PC-3 (cell line): ENCODE measurements at regions of chr1 and their contacts with region 1.

Region 1: GRCh38 chr1:170010443-170010842 is 64.1 kb downstream of the KIFAP3 start:
- DNase-seq: peak; percentile 69
- ATAC-seq: no peak
- H3K4me3 ChIP-seq: no peak overlapping the region
- H3K27ac ChIP-seq: no peak overlapping the region
- H3K4me1 ChIP-seq: 0 out of 2 replicates have a peak, but pooled peaks cover 5% of the 10 kb centered on the region
- H3K27me3 ChIP-seq: no peaks in the 10 kb centered on the region
- CTCF ChIP-seq: peak; percentile 58

Region 2: DNA sequence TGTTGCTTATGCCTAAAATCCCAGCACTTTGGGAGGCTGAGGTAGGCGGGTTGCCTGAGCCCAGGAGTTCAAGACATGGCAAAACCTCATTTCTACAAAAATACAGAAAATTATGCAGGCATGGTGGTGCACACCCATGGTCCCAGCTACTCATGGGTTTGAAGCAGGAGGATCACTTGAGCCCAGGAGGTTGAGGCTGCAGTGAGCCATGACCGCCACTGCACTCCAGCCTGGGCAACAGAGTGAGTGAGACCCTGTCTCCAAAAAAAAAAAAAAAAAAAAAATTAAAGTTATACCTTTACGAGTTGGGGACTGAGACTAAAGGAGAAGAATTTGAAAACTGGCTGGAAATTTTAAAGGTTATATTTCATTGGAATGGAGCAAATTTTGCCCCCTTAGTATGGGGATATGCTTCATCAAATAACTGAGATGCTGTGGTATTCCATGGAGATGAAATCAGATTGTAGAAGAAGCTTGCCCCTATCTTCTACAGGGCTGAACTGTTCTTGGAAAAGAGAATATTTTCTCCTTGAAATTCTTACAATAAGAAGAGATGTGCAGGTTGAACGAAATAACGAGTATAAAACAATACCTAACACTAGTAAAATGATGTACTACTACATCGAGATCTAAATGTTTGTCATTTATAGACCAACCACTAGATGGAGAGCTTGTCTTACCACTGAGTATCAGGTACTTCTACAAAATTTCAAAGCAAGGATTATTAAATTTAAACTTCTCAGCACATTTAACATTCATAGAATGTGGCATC is 81.8 kb before region 1 on chr1:
- CTCF ChIA-PET with region 1: no interaction called
- POLR2A ChIA-PET with region 1: no interaction called
- intact Hi-C with region 1: loop called (anchors 5 kb)
- DNase-seq: peak; percentile 61
- ATAC-seq: peak; percentile 45; the same call in 1 of the 2 replicates
- H3K4me3 ChIP-seq: no peak overlapping the region
- H3K27ac ChIP-seq: no peak overlapping the region
- H3K4me1 ChIP-seq: peaks cover 17% of the 10 kb centered on the region
- H3K27me3 ChIP-seq: no peaks in the 10 kb centered on the region
- CTCF ChIP-seq: peak; percentile 79

Region 3: GRCh38 chr1:170074250-170075157 is 64.1 kb after region 1 on chr1 and contains the start of gene KIFAP3:
- CTCF ChIA-PET with region 1: no interaction called
- POLR2A ChIA-PET with region 1: no interaction called
- intact Hi-C with region 1: loop called (anchors 5 kb)
- DNase-seq: peak; percentile 95
- ATAC-seq: peak; percentile 95
- H3K4me3 ChIP-seq: peak within 1 kb of the TSS; percentile 74
- H3K27ac ChIP-seq: 0 out of 2 replicates have a peak within 1 kb of the TSS, but pooled peaks have one; percentile 19
- H3K4me1 ChIP-seq: peaks cover 10% of the 10 kb centered on the region; the same call in 1 of the 2 replicates
- H3K27me3 ChIP-seq: no peaks in the 10 kb centered on the region
- CTCF ChIP-seq: peak; percentile 55
- total RNA-seq, gene KIFAP3: 5.1 and 6.9 TPM in 2 replicates

Region 4: GRCh38 chr1:170085091-170085490 is 74.6 kb after region 1 on chr1:
- CTCF ChIA-PET with region 1: no interaction called
- POLR2A ChIA-PET with region 1: no interaction called
- intact Hi-C with region 1: no loop called
- DNase-seq: no peak
- ATAC-seq: no peak
- H3K4me3 ChIP-seq: no peak overlapping the region
- H3K27ac ChIP-seq: no peak overlapping the region
- H3K4me1 ChIP-seq: no peaks in the 10 kb centered on the region
- H3K27me3 ChIP-seq: no peaks in the 10 kb centered on the region
- CTCF ChIP-seq: no peak

Region 5: DNA sequence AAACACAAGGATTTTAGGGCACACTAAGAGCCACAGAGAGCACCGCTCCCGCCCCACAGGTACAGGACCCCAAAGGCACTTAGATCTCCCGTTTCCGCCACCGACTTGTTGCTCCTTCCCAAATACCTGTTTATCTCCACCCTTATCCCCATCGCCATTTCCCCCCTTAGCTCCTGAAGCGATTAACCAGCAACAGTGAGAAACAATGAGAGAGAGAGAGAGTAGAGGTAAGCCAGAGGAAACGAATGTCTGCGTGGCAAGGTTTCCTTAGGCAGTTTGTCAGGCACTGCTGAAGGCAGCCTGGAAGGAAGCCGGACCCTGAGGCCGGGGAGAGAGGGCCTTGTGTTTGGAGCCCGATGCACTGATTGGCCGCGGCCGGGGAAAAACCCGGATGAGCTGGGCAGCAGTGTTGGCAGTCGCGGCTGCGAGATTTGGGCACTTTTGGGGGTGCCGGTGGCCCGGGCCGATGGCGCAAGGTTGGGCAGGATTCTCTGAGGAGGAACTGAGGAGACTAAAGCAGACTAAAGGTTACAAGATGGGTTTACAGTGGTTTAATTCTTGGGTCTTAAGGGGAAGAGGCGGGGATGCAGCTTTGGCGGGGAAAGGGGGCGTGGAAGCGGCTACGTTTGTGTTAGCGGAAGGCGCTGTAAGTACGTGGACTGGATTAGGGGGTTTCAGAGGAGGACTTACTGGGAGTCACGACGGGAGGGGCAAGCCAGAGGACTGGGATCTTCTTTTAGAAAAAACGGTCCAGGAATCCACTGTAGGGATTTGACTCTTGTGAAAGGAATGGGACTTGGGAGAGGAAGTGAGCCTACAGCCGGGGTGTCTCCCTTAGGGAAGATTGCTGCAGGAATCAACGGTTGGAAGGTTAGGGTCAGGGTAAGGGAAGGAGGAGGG is 521.6 kb after region 1 on chr1 and contains the start of gene GORAB:
- CTCF ChIA-PET with region 1: no interaction called
- POLR2A ChIA-PET with region 1: no interaction called
- intact Hi-C with region 1: loop called (anchors 5 kb)
- DNase-seq: peak; percentile 96
- ATAC-seq: peak; percentile 97
- H3K4me3 ChIP-seq: peak within 1 kb of the TSS; percentile 72
- H3K27ac ChIP-seq: peak within 1 kb of the TSS; percentile 81
- H3K4me1 ChIP-seq: peaks cover 19% of the 10 kb centered on the region
- H3K27me3 ChIP-seq: peaks cover 4% of the 10 kb centered on the region; the same call in 1 of the 2 replicates
- CTCF ChIP-seq: no peak
- total RNA-seq, gene GORAB: 22.1 and 23.2 TPM in 2 replicates

Region 6: GRCh38 chr1:170765712-170766330 is 755.4 kb after region 1 on chr1:
- CTCF ChIA-PET with region 1: interaction called, 4 read pairs
- POLR2A ChIA-PET with region 1: no interaction called
- intact Hi-C with region 1: loop called (anchors 1 kb)
- DNase-seq: peak; percentile 46
- ATAC-seq: peak; percentile 43
- H3K4me3 ChIP-seq: no peak overlapping the region
- H3K27ac ChIP-seq: no peak overlapping the region
- H3K4me1 ChIP-seq: no peaks in the 10 kb centered on the region
- H3K27me3 ChIP-seq: no peaks in the 10 kb centered on the region
- CTCF ChIP-seq: peak; percentile 70

Region 7: DNA sequence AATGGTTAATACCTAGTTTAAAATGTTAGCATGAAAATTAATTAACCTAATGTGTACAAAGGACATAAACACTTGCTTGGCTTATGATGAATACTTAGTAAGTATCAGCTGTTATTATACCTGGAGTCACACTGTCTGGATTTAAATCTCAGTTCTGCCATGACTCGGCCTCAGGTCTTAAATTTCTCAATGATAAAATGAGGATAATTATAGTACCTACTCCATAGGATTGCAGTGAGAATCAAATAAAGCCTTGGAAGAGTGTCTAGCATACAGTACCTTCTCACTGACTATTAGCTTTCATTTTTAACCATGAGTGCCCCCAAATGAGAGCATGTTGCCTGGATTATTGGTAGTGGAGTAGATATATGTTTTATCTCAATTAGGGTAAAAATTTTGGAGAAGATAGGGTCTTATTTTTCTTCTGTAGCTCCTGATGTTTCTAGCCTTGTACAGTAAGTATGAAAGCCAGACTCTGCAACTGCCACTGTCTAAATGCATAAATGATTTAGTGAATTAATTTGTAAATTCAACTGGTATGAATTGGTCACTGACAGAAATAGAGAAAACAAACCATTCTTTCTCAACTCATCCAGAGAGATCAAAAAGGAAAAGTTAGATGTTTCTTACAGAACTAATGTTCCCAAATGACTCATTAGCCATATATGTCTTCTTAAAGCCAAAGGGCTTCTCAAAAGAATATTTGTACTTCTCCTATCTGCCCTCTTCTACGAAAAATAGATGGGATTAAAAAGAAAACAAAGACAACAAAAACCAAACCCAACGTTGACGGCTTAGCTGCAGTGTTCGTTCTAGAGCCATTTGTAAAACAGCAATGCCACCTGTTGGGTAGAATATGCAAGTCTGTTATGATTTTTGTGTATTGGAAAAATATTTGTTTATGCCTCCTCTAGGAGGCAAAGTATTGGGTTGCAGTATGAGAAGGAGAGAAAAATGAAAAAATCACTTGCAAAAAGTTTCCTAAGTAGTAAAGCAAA is 871.1 kb after region 1 on chr1:
- CTCF ChIA-PET with region 1: no interaction called
- POLR2A ChIA-PET with region 1: no interaction called
- intact Hi-C with region 1: loop called (anchors 1 kb)
- DNase-seq: peak; percentile 70
- ATAC-seq: peak; percentile 81
- H3K4me3 ChIP-seq: peak overlapping the region; percentile 18; the same call in 1 of the 2 replicates
- H3K27ac ChIP-seq: no peak overlapping the region
- H3K4me1 ChIP-seq: no peaks in the 10 kb centered on the region
- H3K27me3 ChIP-seq: peaks cover 63% of the 10 kb centered on the region
- CTCF ChIP-seq: peak; percentile 90